Pancreas (tissue), 10 donors: ENCODE measurements at regions of chr3 and their contacts with region 1.

Region 1: DNA sequence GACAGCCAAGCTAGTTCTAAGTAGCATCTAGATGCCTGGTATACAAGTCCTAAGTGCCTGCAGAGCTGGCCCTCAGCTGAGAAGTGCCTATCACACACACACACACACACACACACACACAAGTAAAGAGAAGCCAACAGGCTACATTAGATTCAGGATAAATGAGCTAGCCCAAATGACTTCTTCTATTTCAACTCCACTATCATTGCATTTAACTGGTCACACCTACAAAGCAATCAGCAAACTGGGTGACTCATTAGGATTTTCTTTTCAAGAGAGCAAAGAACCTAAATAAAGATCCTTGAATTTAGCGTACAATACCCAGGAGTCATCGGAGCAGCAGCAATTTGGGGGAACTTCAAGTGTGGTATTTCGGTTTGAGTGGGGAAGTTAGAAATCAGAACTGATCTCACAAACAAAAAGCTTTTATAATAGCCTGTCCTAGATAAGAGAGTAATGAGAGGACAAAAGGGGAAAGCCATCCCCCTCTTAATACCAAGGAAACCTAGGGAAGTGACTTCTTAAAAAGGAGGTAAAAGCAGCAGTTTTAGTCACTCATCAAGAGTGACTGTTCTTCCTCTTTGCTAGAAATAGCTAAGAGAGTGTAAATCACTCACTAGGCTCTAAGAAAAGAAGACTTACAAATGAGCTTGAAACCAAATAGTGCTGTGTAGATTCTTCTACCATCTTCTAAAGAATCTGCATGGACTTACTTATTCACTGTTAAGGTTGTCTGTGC is 112.7 kb downstream of the TNIK start:
- DNase-seq: no peak
- ATAC-seq: peak in 3 of 4 donors; percentile 31 to 49 (median 43)
- H3K4me3 ChIP-seq: no peak overlapping the region
- H3K27ac ChIP-seq: no peak overlapping the region
- H3K4me1 ChIP-seq: peaks cover 0 to 2% (median 1%) of the 10 kb centered on the region in 3 donors
- H3K27me3 ChIP-seq: no peaks in the 10 kb centered on the region
- CTCF ChIP-seq: no peak

Region 2: DNA sequence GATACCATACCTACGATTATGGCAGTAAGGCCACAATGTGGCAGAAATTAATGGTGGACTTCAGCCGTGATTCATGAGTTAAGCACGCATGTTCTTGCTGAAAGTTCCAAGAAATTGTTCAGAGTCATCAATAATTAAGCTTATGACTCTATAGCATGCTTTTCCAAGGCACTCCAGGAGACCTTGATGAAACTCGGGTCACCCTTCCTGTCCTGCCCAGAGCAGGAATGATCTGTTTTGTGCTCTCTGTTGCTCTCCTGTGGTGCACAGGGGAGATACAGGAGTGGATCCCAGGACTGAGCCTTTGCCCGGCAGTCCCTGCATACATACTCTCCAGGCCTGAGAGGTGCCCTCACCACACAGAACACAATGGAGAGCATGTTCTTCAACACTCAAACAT is 179.4 kb before region 1 on chr3:
- intact Hi-C with region 1: no loop called
- DNase-seq: peak in 1 of 6 donors; percentile 47
- ATAC-seq: peak; percentile 66 to 83 (median 76)
- H3K4me3 ChIP-seq: no peak overlapping the region
- H3K27ac ChIP-seq: no peak overlapping the region
- H3K4me1 ChIP-seq: peaks cover 10 to 31% (median 14%) of the 10 kb centered on the region in 3 donors
- H3K27me3 ChIP-seq: no peaks in the 10 kb centered on the region
- CTCF ChIP-seq: peak in 3 of 4 donors; percentile 8 to 20 (median 10)

Region 3: DNA sequence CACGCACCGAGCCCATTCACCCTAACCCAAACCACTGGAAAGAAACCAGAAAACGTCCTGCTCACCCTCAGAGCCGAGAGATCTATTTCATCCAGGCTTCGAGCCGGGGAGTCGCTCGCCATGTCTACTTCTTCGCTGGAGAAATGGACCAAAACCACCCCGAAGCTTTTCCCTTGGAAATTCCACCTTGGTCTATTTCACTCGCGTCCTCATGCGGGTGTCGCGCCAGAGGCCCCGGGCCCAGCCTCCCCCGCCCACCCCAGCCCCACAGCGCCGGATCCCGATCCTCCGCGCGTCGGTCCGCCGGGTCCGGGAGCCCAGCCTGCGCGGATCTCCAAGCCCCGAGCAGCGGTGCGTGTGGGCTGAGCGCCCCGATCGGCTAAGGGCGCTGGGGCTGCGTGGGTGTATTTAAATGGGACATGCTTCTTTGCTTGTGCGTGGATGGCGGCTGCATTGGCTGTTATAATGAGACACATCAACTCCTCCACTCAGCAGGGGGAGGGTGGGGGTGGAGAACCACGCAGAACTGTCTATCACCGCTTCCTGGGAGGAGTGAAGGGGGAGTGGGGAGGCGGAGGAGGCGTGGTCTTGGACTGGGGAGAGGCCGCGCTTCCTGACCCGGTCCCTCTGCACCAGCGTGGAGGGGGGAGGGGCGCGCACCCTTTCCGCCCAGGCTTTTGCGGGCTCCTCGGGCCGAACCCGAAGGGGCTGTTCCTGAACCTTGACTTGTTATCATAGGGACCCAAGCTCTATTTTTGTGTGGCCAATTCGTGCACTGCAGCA is 112.7 kb after region 1 on chr3 and contains the start of gene TNIK:
- intact Hi-C with region 1: loop called in 1 of 3 experiments (anchors 10 kb)
- DNase-seq: peak; percentile 88 to 97 (median 90)
- ATAC-seq: peak; percentile 92 to 95 (median 94)
- H3K4me3 ChIP-seq: peak within 1 kb of the TSS; percentile 54 to 93 (median 70)
- H3K27ac ChIP-seq: peak within 1 kb of the TSS; percentile 15 to 76 (median 41)
- H3K4me1 ChIP-seq: peaks cover 3 to 22% (median 8%) of the 10 kb centered on the region in 3 donors
- H3K27me3 ChIP-seq: no peaks in the 10 kb centered on the region
- CTCF ChIP-seq: no peak
- total RNA-seq, gene TNIK: 4.4 to 13.6 (median 6.0) TPM